ENCODE measurements at regions of chr5 and their contacts with region 1.

Region 1: GRCh38 chr5:96997265-96997859 is 61.5 kb downstream of the LNPEP start:
- DNase-seq: peak; percentile 39
- H3K4me3 Mint-ChIP-seq: no peak overlapping the region
- H3K27ac Mint-ChIP-seq: no peak overlapping the region
- H3K4me1 Mint-ChIP-seq: peaks cover 29% of the 10 kb centered on the region
- H3K27me3 Mint-ChIP-seq: no peaks in the 10 kb centered on the region

Region 2: DNA sequence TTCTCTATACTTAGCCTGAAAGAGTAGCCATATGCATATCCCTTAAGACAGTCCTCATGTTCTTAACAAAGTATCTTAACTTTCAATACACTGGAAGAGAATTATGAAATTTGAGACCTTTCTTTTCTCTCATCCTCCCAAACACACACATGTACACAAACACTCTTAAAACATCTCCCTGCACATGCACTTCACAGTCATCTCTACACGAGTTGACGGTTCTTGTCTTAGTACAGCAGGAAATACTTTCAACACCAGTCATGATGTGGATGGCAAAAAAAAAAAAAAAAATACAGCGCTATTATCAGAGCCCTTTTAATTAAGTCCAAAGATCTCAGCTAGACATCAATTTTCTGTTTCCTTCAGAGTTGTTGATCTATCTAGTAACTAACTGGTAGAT is 520.7 kb before region 1 on chr5:
- CTCF ChIA-PET with region 1: no interaction called
- DNase-seq: no peak
- H3K4me3 Mint-ChIP-seq: no peak overlapping the region
- H3K27ac Mint-ChIP-seq: no peak overlapping the region
- H3K4me1 Mint-ChIP-seq: no peaks in the 10 kb centered on the region
- H3K27me3 Mint-ChIP-seq: no peaks in the 10 kb centered on the region

Region 3: DNA sequence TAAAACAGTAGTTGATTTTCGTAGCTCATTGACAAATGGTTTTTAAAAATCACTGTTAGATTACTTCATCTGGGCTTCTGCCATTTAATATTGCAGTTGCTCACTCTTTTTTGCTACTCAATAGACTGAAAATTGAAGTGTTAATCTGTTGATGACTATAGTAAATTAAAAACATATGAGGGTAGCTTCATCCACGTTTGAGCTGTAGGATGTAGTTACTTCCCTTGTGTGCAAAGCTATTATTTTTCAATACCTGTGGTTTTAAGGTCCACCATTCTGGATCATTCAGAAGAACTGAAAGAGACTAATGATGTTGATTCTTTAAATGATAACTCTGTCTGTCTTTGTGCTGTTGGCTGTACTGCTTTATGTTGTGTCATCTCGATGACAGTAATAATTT is 13.2 kb after region 1 on chr5:
- CTCF ChIA-PET with region 1: interaction called, 17 read pairs
- DNase-seq: no peak
- H3K4me3 Mint-ChIP-seq: no peak overlapping the region
- H3K27ac Mint-ChIP-seq: no peak overlapping the region
- H3K4me1 Mint-ChIP-seq: peaks cover 24% of the 10 kb centered on the region
- H3K27me3 Mint-ChIP-seq: no peaks in the 10 kb centered on the region

Region 4: DNA sequence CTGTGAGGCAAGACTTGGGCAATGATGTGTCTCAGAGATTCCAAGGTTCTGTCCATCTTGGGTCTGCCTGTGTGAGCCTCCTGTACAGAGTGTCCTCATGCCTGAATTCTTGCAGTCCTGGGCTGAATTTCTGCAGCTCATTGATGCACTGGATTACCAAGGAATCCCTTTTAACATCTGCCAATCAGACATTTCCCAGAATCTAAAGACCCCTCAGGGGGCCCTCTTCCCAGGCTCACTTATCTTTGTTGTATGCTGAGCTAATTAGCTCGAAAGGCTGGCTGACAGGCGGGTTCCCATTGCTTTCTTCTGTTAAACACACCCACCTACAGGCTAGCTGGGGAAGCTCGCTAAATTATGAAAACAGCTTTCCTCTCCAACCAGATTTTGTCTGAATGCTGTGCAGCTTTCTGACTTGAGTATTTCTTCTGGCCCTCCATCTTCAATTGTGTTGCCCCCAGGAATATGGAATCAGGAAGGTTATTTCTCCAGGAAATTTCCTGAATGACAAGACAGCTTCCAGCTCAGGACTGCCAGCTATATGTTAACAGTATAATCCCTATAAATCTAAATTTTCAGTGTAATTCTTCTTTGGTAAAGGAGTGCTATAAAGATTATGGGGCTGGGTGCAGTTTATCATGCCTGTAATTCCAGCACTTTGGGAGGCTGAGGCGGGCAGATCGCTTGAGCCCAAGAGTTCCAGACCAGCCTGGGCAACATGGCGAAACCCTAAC is 145.3 kb after region 1 on chr5 and contains the start of gene LIX1:
- CTCF ChIA-PET with region 1: interaction called, 29 read pairs
- DNase-seq: peak; percentile 58
- H3K4me3 Mint-ChIP-seq: no peak within 1 kb of the TSS
- H3K27ac Mint-ChIP-seq: no peak within 1 kb of the TSS
- H3K4me1 Mint-ChIP-seq: no peaks in the 10 kb centered on the region
- H3K27me3 Mint-ChIP-seq: peaks cover 28% of the 10 kb centered on the region